Naive thymus-derived CD4-positive, alpha-beta T cell (primary cell): ENCODE measurements at regions of chr13 and their contacts with region 1.

Region 1: DNA sequence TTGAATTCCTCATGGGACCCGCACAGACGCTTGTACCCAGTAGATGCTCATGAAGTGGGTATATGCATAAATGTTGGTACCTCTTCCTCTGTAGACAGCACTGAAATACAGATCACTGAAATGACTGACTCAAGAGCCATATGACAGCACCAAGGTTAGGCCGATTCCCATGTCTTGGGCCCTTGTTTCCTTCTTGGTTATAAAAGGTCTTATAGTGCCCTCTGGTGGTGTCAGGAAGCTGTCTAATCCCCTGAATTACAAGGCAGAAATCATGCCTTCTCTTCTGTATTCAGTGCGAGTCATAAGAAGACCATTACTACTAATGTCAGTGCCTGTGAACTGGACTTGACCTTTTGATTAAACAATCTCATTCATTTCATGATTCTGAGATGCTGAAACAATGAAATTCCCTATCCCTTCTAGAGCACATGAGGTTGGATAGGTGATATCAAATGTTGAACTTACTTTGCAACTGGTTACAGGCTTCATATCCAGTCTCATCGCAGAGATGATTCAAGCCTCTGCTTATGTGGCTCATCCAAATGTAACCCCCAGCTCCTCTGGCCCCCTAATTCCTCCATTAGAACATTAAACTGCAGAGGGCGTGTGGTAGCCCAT is 59.7 kb downstream of the SPATA13 start:
- DNase-seq: peak in 7 of 9 donors; percentile 59 to 77 (median 70)
- ATAC-seq: peak; percentile 88
- H3K4me3 ChIP-seq: no peak overlapping the region
- H3K4me3 Mint-ChIP-seq: no peak overlapping the region
- H3K27ac ChIP-seq: no peak overlapping the region
- H3K27ac Mint-ChIP-seq: peak overlapping the region in 2 of 9 donors; percentile 10 to 50
- H3K4me1 ChIP-seq: peaks cover 0 to 7% of the 10 kb centered on the region in 2 donors
- H3K4me1 Mint-ChIP-seq: peaks cover 7 to 44% (median 22%) of the 10 kb centered on the region in 7 donors
- H3K27me3 ChIP-seq: no peaks in the 10 kb centered on the region
- H3K27me3 Mint-ChIP-seq: no peaks in the 10 kb centered on the region

Region 2: DNA sequence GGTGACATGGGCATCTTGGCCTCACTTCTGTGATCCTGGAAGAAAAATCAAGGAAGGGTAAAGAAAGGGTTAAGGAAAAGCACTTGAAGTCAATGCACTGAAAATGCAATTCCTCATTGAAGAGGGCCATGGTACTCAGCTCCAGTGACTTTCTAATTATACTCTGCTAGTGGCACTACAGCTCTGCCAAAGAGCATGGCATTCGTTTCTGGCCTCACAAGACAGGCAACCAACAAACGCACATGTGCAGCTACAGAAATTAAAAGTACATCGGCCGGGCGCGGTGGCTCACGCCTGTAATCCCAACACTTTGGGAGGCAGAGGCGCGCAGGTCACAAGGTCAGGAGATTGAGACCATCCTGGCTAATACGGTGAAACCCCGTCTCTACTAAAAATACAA is 808.5 kb before region 1 on chr13:
- CTCF ChIA-PET with region 1: no interaction called
- POLR2A ChIA-PET with region 1: no interaction called
- intact Hi-C with region 1: loop called in 1 of 2 experiments (anchors 1 kb)
- DNase-seq: no peak
- ATAC-seq: no peak
- H3K4me3 ChIP-seq: no peak overlapping the region
- H3K4me3 Mint-ChIP-seq: no peak overlapping the region
- H3K27ac ChIP-seq: no peak overlapping the region
- H3K27ac Mint-ChIP-seq: no peak overlapping the region
- H3K4me1 ChIP-seq: no peaks in the 10 kb centered on the region
- H3K4me1 Mint-ChIP-seq: peaks cover 0 to 3% (median 0%) of the 10 kb centered on the region in 7 donors
- H3K27me3 ChIP-seq: no peaks in the 10 kb centered on the region
- H3K27me3 Mint-ChIP-seq: peaks cover 4 to 17% (median 6%) of the 10 kb centered on the region in 5 donors

Region 3: GRCh38 chr13:24020375-24020830 is 199.8 kb before region 1 on chr13:
- CTCF ChIA-PET with region 1: interaction called, 4 read pairs
- POLR2A ChIA-PET with region 1: interaction called, 4 read pairs
- intact Hi-C with region 1: loop called (anchors 1 kb)
- DNase-seq: peak in 6 of 9 donors; percentile 11 to 33 (median 21)
- ATAC-seq: no peak
- H3K4me3 ChIP-seq: no peak overlapping the region
- H3K4me3 Mint-ChIP-seq: no peak overlapping the region
- H3K27ac ChIP-seq: no peak overlapping the region
- H3K27ac Mint-ChIP-seq: no peak overlapping the region
- H3K4me1 ChIP-seq: no peaks in the 10 kb centered on the region
- H3K4me1 Mint-ChIP-seq: peaks cover 0 to 4% (median 0%) of the 10 kb centered on the region in 7 donors
- H3K27me3 ChIP-seq: no peaks in the 10 kb centered on the region
- H3K27me3 Mint-ChIP-seq: peaks cover 0 to 4% (median 0%) of the 10 kb centered on the region in 5 donors

Region 4: DNA sequence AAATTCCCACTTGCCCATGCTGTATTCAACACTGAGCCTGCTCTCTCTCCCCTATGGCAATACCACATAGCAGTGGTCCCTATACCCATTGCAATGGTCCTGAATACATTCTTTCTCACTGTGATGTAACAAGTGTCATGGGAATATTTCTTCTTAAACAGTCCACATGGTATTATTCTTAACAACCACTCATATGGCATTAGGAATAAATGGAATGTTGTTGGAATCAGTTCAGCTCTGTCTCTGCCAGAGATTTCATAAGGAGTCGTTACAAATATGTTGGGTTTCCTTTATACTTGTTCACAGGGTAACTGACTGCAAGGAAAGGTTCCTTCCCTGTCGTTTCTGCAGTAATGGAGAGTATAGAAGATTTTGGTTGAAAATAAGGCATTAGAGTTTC is 187.9 kb before region 1 on chr13:
- CTCF ChIA-PET with region 1: no interaction called
- POLR2A ChIA-PET with region 1: no interaction called
- intact Hi-C with region 1: no loop called
- DNase-seq: no peak
- ATAC-seq: no peak
- H3K4me3 ChIP-seq: no peak overlapping the region
- H3K4me3 Mint-ChIP-seq: no peak overlapping the region
- H3K27ac ChIP-seq: no peak overlapping the region
- H3K27ac Mint-ChIP-seq: no peak overlapping the region
- H3K4me1 ChIP-seq: no peaks in the 10 kb centered on the region
- H3K4me1 Mint-ChIP-seq: peaks cover 0 to 1% (median 0%) of the 10 kb centered on the region in 7 donors
- H3K27me3 ChIP-seq: no peaks in the 10 kb centered on the region
- H3K27me3 Mint-ChIP-seq: peaks cover 4 to 42% (median 21%) of the 10 kb centered on the region in 5 donors

Region 5: GRCh38 chr13:24053519-24054251 is 166.5 kb before region 1 on chr13:
- CTCF ChIA-PET with region 1: interaction called, 45 read pairs
- POLR2A ChIA-PET with region 1: no interaction called
- intact Hi-C with region 1: loop called (anchors 1 kb)
- DNase-seq: peak; percentile 24 to 70 (median 61)
- ATAC-seq: peak; percentile 91
- H3K4me3 ChIP-seq: no peak overlapping the region
- H3K4me3 Mint-ChIP-seq: no peak overlapping the region
- H3K27ac ChIP-seq: no peak overlapping the region
- H3K27ac Mint-ChIP-seq: peak overlapping the region in 5 of 9 donors; percentile 21 to 68 (median 24)
- H3K4me1 ChIP-seq: no peaks in the 10 kb centered on the region
- H3K4me1 Mint-ChIP-seq: peaks cover 0 to 12% (median 9%) of the 10 kb centered on the region in 7 donors
- H3K27me3 ChIP-seq: no peaks in the 10 kb centered on the region
- H3K27me3 Mint-ChIP-seq: peaks cover 3 to 22% (median 7%) of the 10 kb centered on the region in 5 donors